HAP-1 (cell line): ENCODE measurements at regions of chr11 and their contacts with region 1.

Region 1: GRCh38 chr11:75867775-75868374 is 52.9 kb downstream of the UVRAG start:
- DNase-seq: peak; percentile 61 to 63
- H3K4me3 ChIP-seq: no peak overlapping the region
- H3K4me1 ChIP-seq: no peaks in the 10 kb centered on the region
- H3K27me3 ChIP-seq: no peaks in the 10 kb centered on the region

Region 2: GRCh38 chr11:75802913-75803820 is 64.7 kb before region 1 on chr11:
- in situ Hi-C with region 1: loop called (anchors 10 kb)
- DNase-seq: peak; percentile 61 to 85
- H3K4me3 ChIP-seq: no peak overlapping the region
- H3K4me1 ChIP-seq: no peaks in the 10 kb centered on the region
- H3K27me3 ChIP-seq: no peaks in the 10 kb centered on the region

Region 3: DNA sequence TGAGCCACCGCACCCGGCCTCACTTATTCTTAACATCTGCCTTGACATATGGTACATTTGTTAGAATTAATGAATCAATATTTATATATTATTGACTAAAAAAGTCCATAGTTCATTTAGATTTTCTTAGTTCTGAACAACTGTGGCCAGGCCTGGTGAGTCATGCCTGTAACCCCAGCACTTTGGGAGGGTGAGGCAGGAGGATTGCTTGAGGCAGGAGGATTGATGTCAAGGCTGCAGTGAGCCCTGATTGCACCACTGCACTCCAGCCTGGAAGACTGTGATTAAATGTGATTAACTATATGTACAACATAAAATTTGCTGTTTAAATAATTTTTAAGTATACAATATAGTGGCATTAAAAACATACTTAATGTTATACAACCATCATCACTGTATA is 47.2 kb before region 1 on chr11:
- in situ Hi-C with region 1: loop called (anchors 5 kb)
- DNase-seq: no peak
- H3K4me3 ChIP-seq: no peak overlapping the region
- H3K4me1 ChIP-seq: peaks cover 6% of the 10 kb centered on the region; the same call in 1 of the 2 replicates
- H3K27me3 ChIP-seq: no peaks in the 10 kb centered on the region